Posterior vena cava (tissue), 2 donors: ENCODE measurements at regions of chr4 and their contacts with region 1.

Region 1: DNA sequence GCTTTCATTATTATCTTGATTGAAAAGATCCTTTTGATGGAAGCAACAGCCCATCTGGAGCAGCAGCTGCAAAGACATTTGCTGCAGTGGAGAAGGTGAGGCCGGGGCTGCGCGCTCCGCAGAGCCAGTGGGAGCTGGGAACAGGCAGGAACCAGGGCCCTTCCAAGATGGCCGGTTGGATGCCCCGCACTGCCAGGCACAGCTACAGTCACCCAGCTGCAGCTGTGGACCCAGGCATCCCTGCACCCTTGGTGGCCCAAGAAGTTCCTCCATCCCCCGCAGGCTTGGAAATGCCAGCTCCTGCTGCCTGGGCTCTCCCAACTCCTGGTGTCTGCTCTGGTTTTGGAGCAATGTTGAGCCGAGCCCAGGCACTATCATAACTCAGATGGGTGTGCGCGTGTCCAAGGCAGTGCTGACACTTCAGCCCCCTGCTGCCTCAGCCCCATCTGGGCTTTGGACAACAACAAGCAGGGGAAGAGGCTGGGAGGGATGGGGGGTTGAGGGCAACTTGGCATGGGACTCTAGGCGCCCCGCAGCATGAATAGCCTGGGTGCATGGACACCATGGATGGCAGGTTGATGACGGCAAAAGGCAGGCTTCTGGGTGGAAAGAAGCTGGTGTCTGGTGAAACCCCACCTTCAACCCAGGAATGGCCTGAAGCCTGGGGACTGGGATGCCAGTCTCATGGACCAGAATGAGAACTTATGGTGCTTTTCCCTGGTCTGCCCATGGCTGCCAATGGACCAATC is 371.8 kb downstream of the FSTL5 start:
- DNase-seq: no peak

Region 2: GRCh38 chr4:161822174-161822573 is 30.2 kb after region 1 on chr4:
- intact Hi-C with region 1: loop called in 1 of 2 experiments (anchors 2 kb)
- DNase-seq: no peak